AG04449 (cell line): ENCODE measurements at regions of chr14 and their contacts with region 1.

Region 1: GRCh38 chr14:59632381-59632780 is 55.8 kb upstream of the CCDC175 start:
- DNase-seq: no peak
- H3K4me3 ChIP-seq: no peak overlapping the region
- CTCF ChIP-seq: peak; percentile 39

Region 2: GRCh38 chr14:59679872-59680271 is 47.5 kb after region 1 on chr14:
- CTCF ChIA-PET with region 1: interaction called, 13 read pairs
- POLR2A ChIA-PET with region 1: no interaction called
- DNase-seq: no peak
- H3K4me3 ChIP-seq: no peak overlapping the region
- CTCF ChIP-seq: no peak

Region 3: GRCh38 chr14:59918824-59919569 is 286.6 kb after region 1 on chr14:
- CTCF ChIA-PET with region 1: interaction called, 11 read pairs
- POLR2A ChIA-PET with region 1: no interaction called
- DNase-seq: no peak
- H3K4me3 ChIP-seq: peak overlapping the region; percentile 16
- CTCF ChIP-seq: peak; percentile 36